ENCODE measurements at regions of chr17 and their contacts with region 1.

Region 1: GRCh38 chr17:63549946-63550807 is at the start of gene DCAF7:
- DNase-seq: peak; percentile 100
- H3K4me3 ChIP-seq: peak within 1 kb of the TSS; percentile 87 to 99 (median 96)
- H3K27ac ChIP-seq: peak within 1 kb of the TSS; percentile 91 to 95 (median 92)
- H3K4me1 ChIP-seq: peaks cover 22 to 54% (median 52%) of the 10 kb centered on the region in 4 donors
- H3K27me3 ChIP-seq: no peaks in the 10 kb centered on the region
- CTCF ChIP-seq: peak in 1 of 3 experiments; percentile 34
- EP300 ChIP-seq: no peak
- POLR2A ChIP-seq: no peak
- total RNA-seq, gene DCAF7: 24.9 to 45.2 (median 34.2) TPM

Region 2: GRCh38 chr17:63406689-63407330 is 143.4 kb before region 1 on chr17:
- intact Hi-C with region 1: no loop called
- DNase-seq: no peak
- H3K4me3 ChIP-seq: no peak overlapping the region
- H3K27ac ChIP-seq: peak overlapping the region in 1 of 4 donors; percentile 13
- H3K4me1 ChIP-seq: peaks cover 0 to 19% (median 12%) of the 10 kb centered on the region in 4 donors
- H3K27me3 ChIP-seq: no peaks in the 10 kb centered on the region
- CTCF ChIP-seq: peak; percentile 80 to 87 (median 82)
- EP300 ChIP-seq: no peak
- POLR2A ChIP-seq: no peak

Region 3: DNA sequence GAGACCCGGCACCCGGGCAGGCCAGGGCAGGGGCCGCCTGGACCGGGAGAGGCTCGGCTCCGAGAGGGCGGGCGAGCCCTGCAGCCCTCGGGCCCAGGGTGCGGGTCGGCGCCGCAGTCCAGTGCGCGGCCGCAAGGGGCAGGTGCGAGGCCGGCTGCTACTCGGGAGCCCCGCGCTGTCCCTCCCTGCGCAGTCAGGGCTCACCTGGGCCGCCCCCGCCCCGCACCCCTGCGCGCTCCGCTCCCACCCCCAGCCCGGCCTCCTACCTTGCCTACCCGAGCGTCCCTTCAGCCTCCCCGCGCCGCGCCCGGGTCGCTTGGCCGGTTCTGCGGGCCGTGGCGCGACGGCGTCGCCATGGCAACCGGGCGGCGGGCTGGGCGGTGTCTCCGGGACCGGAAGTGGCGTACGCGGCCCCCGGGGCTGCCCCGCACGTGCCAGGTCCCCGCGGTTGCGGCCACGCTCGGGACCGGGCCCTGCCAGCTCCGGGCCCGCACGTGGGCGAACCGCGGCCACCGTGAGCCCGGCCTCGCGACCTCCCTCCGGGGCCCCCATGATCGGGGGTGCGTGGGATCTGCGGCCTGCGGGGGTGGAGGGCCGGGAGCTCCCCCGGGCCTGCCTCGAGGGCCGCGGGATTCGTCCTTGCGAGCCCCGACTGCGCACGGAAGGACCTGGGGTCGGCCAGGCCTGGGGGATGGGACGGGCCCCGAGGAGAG is 104.0 kb before region 1 on chr17 and contains the start of gene CYB561:
- intact Hi-C with region 1: loop called (anchors 5 kb)
- DNase-seq: no peak
- H3K4me3 ChIP-seq: peak within 1 kb of the TSS; percentile 65 to 83 (median 78)
- H3K27ac ChIP-seq: peak within 1 kb of the TSS; percentile 62 to 90 (median 84)
- H3K4me1 ChIP-seq: peaks cover 29 to 47% (median 37%) of the 10 kb centered on the region in 4 donors
- H3K27me3 ChIP-seq: no peaks in the 10 kb centered on the region
- CTCF ChIP-seq: peak in 2 of 3 experiments; percentile 39 to 70
- EP300 ChIP-seq: no peak
- POLR2A ChIP-seq: no peak
- total RNA-seq, gene CYB561: 8.8 to 17.0 (median 13.2) TPM

Region 4: GRCh38 chr17:63600569-63601438 is 50.6 kb after region 1 on chr17 and contains the start of gene TACO1:
- intact Hi-C with region 1: loop called (anchors 5 kb)
- DNase-seq: peak; percentile 96
- H3K4me3 ChIP-seq: peak within 1 kb of the TSS; percentile 84 to 99 (median 88)
- H3K27ac ChIP-seq: peak within 1 kb of the TSS; percentile 84 to 92 (median 90)
- H3K4me1 ChIP-seq: peaks cover 18 to 31% (median 21%) of the 10 kb centered on the region in 4 donors
- H3K27me3 ChIP-seq: no peaks in the 10 kb centered on the region
- CTCF ChIP-seq: no peak
- EP300 ChIP-seq: no peak
- POLR2A ChIP-seq: peak; percentile 14
- total RNA-seq, gene TACO1: 9.4 to 35.0 (median 14.8) TPM